ENCODE measurements at regions of chr9 and their contacts with region 1.

Region 1: DNA sequence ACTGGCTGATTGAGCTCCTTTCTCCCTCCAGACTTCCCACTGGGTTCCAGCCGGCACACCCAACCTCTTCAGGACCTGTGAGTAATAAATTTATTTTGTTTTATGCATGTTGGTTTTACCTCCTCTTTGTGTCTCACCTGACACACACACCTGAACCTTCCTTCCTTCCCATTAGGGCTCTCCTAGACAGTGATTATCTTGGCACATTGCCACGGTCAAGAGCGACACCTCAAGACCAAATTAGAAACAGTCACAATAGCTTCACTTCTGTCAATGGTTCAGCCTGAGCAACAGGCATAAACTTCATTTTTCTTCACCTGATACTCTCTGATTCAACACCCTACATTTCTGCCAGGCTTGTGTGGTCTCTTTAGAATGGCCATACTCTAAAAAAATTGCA is 296.3 kb upstream of the SMARCA2 start:
- DNase-seq: no peak
- H3K4me3 ChIP-seq: no peak overlapping the region
- H3K27ac ChIP-seq: no peak overlapping the region
- H3K4me1 ChIP-seq: no peaks in the 10 kb centered on the region
- H3K27me3 ChIP-seq: no peaks in the 10 kb centered on the region
- CTCF ChIP-seq: no peak
- EP300 ChIP-seq: no peak
- POLR2A ChIP-seq: no peak

Region 2: DNA sequence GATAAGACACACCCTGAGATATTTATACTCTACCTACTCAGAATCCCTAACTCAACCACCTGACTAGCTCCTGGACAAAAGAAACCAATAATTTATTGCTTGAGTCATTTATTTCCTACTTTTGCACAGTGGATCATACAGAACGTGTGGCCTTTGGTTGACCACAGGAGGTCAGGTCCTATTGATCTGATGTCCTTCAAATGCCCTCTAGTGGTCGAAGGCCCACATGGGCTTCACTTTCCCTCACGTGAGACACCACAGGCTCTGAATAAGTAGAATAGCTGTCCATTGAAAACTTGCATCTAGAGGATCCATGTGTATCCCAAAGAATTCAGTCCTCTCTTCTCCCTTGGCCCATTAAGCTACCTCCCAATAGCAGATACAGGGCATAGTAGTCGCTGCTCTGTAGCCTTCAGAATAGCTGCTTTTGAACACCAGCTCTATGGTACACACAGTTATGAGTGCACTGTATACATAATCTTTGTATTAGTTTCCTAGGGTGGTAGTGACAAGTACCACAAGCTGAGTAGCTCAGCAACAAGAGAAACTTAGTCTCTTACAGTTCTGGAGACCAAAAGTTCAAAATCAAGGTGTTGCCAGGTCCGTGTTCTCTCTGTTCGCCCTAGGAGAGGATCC is 118.7 kb after region 1 on chr9:
- intact Hi-C with region 1: loop called (anchors 10 kb)
- DNase-seq: no peak
- H3K4me3 ChIP-seq: no peak overlapping the region
- H3K27ac ChIP-seq: no peak overlapping the region
- H3K4me1 ChIP-seq: no peaks in the 10 kb centered on the region
- H3K27me3 ChIP-seq: no peaks in the 10 kb centered on the region
- CTCF ChIP-seq: peak in 1 of 4 experiments; percentile 35
- EP300 ChIP-seq: no peak
- POLR2A ChIP-seq: no peak